ENCODE measurements at regions of chr9 and their contacts with region 1.

Region 1: GRCh38 chr9:101398068-101398929 is at the starts of genes MRPL50 and ZNF189:
- DNase-seq: peak; percentile 86 to 100 (median 98)
- ATAC-seq: peak; percentile 93 to 98 (median 96)
- H3K4me3 ChIP-seq: peak within 1 kb of the TSS; percentile 79 to 98
- H3K4me3 Mint-ChIP-seq: peak within 1 kb of the TSS; percentile 87 to 100 (median 92)
- H3K27ac ChIP-seq: peak within 1 kb of the TSS; percentile 94
- H3K27ac Mint-ChIP-seq: peak within 1 kb of the TSS; percentile 95 to 99
- H3K4me1 ChIP-seq: peaks cover 10 to 19% of the 10 kb centered on the region in 2 experiments
- H3K4me1 Mint-ChIP-seq: peaks cover 74 to 84% (median 76%) of the 10 kb centered on the region in 3 donors
- H3K27me3 ChIP-seq: no peaks in the 10 kb centered on the region
- H3K27me3 Mint-ChIP-seq: no peaks in the 10 kb centered on the region
- total RNA-seq, gene MRPL50: 7.4 to 16.7 (median 16.3) TPM
- total RNA-seq, gene ZNF189: 9.2 to 17.4 (median 16.6) TPM

Region 2: GRCh38 chr9:100426530-100427428 is 971.5 kb before region 1 on chr9 and contains the start of gene MSANTD3:
- CTCF ChIA-PET with region 1: no interaction called
- POLR2A ChIA-PET with region 1: interaction called in 1 of 2 experiments, 10 read pairs
- DNase-seq: peak; percentile 6 to 73 (median 44)
- ATAC-seq: peak; percentile 86 to 91 (median 88)
- H3K4me3 ChIP-seq: peak within 1 kb of the TSS; percentile 73 to 77
- H3K4me3 Mint-ChIP-seq: peak within 1 kb of the TSS; percentile 93 to 99 (median 98)
- H3K27ac ChIP-seq: peak within 1 kb of the TSS; percentile 20
- H3K27ac Mint-ChIP-seq: peak within 1 kb of the TSS; percentile 89 to 93
- H3K4me1 ChIP-seq: peaks cover 5 to 15% of the 10 kb centered on the region in 2 experiments
- H3K4me1 Mint-ChIP-seq: peaks cover 36 to 46% (median 39%) of the 10 kb centered on the region in 3 donors
- H3K27me3 ChIP-seq: peaks cover 0 to 10% of the 10 kb centered on the region in 2 experiments
- H3K27me3 Mint-ChIP-seq: peaks cover 2 to 4% of the 10 kb centered on the region in 2 donors
- total RNA-seq, gene MSANTD3: 7.7 to 15.3 (median 13.1) TPM

Region 3: GRCh38 chr9:101229606-101230005 is 168.7 kb before region 1 on chr9:
- CTCF ChIA-PET with region 1: no interaction called
- POLR2A ChIA-PET with region 1: no interaction called
- DNase-seq: no peak
- ATAC-seq: no peak
- H3K4me3 ChIP-seq: no peak overlapping the region
- H3K4me3 Mint-ChIP-seq: no peak overlapping the region
- H3K27ac ChIP-seq: no peak overlapping the region
- H3K27ac Mint-ChIP-seq: no peak overlapping the region
- H3K4me1 ChIP-seq: no peaks in the 10 kb centered on the region
- H3K4me1 Mint-ChIP-seq: no peaks in the 10 kb centered on the region
- H3K27me3 ChIP-seq: no peaks in the 10 kb centered on the region
- H3K27me3 Mint-ChIP-seq: peaks cover 2 to 7% of the 10 kb centered on the region in 2 donors

Region 4: GRCh38 chr9:101366038-101366756 is 32.1 kb before region 1 on chr9:
- CTCF ChIA-PET with region 1: no interaction called
- POLR2A ChIA-PET with region 1: no interaction called
- DNase-seq: no peak
- ATAC-seq: no peak
- H3K4me3 ChIP-seq: no peak overlapping the region
- H3K4me3 Mint-ChIP-seq: no peak overlapping the region
- H3K27ac ChIP-seq: no peak overlapping the region
- H3K27ac Mint-ChIP-seq: no peak overlapping the region
- H3K4me1 ChIP-seq: no peaks in the 10 kb centered on the region
- H3K4me1 Mint-ChIP-seq: no peaks in the 10 kb centered on the region
- H3K27me3 ChIP-seq: peaks cover 0 to 3% of the 10 kb centered on the region in 2 experiments
- H3K27me3 Mint-ChIP-seq: peaks cover 11 to 21% of the 10 kb centered on the region in 2 donors

Region 5: GRCh38 chr9:101387871-101388506 is 10.3 kb before region 1 on chr9:
- CTCF ChIA-PET with region 1: interaction called, 4 to 15 read pairs
- POLR2A ChIA-PET with region 1: interaction called in 1 of 2 experiments, 6 read pairs
- DNase-seq: peak in 2 of 35 experiments; percentile 7 to 57
- ATAC-seq: peak; percentile 50 to 81 (median 54)
- H3K4me3 ChIP-seq: no peak overlapping the region
- H3K4me3 Mint-ChIP-seq: no peak overlapping the region
- H3K27ac ChIP-seq: peak overlapping the region; percentile 15
- H3K27ac Mint-ChIP-seq: peak overlapping the region; percentile 61 to 78
- H3K4me1 ChIP-seq: no peaks in the 10 kb centered on the region
- H3K4me1 Mint-ChIP-seq: peaks cover 28 to 36% (median 28%) of the 10 kb centered on the region in 3 donors
- H3K27me3 ChIP-seq: no peaks in the 10 kb centered on the region
- H3K27me3 Mint-ChIP-seq: no peaks in the 10 kb centered on the region

Region 6: DNA sequence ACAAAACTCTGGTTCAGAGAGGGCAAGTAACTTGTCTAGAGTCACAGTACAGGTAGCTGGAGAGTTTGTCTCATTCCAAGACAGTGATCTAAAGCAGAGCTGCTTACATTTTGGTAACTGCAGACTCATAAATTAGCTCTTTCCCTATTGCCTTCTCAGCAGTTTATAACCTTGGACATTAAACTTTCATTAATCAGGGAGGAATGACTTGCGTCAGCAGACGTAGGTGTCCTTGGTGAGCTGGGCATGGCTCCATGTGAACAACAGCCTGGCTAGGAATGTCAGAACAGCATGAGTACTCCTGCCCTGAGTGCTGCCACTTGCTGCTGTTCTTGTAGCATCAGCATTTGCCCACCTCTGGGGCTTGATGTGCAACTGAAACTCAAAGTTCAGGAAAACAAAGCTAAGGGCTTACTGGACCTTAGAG is 39.5 kb after region 1 on chr9:
- CTCF ChIA-PET with region 1: no interaction called
- POLR2A ChIA-PET with region 1: no interaction called
- DNase-seq: no peak
- ATAC-seq: no peak
- H3K4me3 ChIP-seq: no peak overlapping the region
- H3K4me3 Mint-ChIP-seq: no peak overlapping the region
- H3K27ac ChIP-seq: no peak overlapping the region
- H3K27ac Mint-ChIP-seq: no peak overlapping the region
- H3K4me1 ChIP-seq: no peaks in the 10 kb centered on the region
- H3K4me1 Mint-ChIP-seq: no peaks in the 10 kb centered on the region
- H3K27me3 ChIP-seq: peaks cover 2 to 5% of the 10 kb centered on the region in 2 experiments
- H3K27me3 Mint-ChIP-seq: peaks cover 23 to 41% of the 10 kb centered on the region in 2 donors

Region 7: DNA sequence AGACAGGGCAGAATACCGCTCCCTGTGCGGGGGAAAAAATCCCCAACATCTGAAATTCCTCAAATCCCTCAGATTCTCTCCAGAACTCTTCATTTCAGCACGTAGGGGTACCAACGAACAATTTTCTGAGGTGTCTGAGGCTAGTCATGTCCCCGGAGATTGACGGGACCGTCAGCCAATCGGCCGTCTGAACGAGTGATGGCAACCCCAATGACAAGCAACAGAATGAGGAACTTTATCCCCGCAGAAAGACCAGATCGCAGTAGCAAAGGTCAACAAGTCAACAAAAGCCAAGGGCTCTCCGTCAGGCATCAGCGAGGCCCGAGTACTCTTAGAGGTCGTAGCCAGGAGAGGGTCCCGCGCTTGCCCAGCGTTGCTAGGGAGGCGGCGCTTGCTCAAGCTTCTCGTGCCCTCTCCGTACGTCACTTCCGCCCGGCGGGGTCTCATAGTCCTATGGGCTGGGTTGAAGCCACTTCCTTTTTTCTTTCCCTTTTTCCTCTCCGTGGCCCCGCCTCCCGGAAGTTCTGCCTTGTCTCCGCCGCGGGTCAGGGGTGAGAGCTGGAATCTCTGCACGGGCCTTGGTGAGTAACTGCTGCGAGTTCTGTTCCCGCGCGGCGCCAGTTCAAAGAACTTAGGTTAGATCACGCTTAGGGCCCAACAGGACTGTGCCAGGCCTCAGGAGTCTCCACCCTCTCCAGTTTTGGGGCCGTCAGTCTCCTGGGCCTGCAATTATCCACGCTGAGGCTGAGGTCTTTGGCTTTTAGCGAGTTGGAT is 135.2 kb after region 1 on chr9 and contains the start of gene RNF20:
- CTCF ChIA-PET with region 1: interaction called in 1 of 2 experiments, 18 read pairs
- POLR2A ChIA-PET with region 1: interaction called, 5 to 9 read pairs
- DNase-seq: peak; percentile 97 to 100 (median 99)
- ATAC-seq: peak; percentile 94 to 95 (median 94)
- H3K4me3 ChIP-seq: peak within 1 kb of the TSS; percentile 96 to 100
- H3K4me3 Mint-ChIP-seq: peak within 1 kb of the TSS; percentile 92 to 98 (median 97)
- H3K27ac ChIP-seq: peak within 1 kb of the TSS; percentile 98
- H3K27ac Mint-ChIP-seq: peak within 1 kb of the TSS; percentile 95 to 100
- H3K4me1 ChIP-seq: peaks cover 15 to 17% of the 10 kb centered on the region in 2 experiments
- H3K4me1 Mint-ChIP-seq: peaks cover 16 to 17% (median 17%) of the 10 kb centered on the region in 3 donors
- H3K27me3 ChIP-seq: peaks cover 0 to 3% of the 10 kb centered on the region in 2 experiments
- H3K27me3 Mint-ChIP-seq: peaks cover 2 to 4% of the 10 kb centered on the region in 2 donors
- total RNA-seq, gene RNF20: 36.8 to 53.4 (median 42.5) TPM

Measured in T-cell (primary cell).